ENCODE measurements at regions of chr6 and their contacts with region 1.

Region 1: DNA sequence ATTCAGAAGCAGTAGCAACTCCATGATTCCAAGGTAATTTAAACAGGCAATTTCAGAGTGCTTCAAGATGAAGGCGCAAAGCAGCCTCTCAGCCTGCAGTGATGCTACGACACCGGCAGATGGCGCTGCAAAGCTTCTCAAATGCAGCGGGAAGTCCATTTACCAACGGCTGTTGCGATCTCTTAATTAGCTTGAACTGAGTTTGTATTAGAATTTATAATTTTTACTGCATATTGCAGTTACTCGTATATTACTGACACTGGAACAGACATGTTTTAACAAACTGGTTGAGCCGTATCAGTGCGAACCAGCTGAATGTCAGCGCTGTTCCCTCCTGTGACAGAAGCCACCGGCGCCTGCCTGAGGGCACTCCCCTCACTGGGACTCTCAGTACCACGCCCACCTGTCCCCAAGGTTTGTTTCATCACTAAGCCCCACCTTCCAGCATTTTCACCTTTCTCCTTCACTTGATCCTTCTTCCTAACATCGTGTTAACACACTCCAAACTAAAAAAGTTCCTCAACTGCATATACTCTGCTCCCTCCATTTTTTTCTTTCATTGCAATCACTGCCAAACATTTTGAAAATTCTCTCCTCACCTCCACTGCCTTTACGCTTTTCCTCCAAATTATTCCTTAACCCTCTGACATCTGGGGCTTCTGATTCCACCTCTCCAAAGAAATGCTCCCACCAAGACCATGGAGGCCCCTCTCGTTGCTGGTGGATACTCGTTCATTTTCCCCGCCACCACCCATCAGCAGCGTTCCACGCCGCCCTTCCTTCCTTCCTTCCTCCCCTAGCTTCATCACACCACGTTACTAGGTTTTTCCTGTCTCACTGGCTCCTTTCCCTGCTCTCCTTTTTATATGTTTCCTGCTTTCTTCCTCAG is 14.5 kb downstream of the GNL1 start:
- DNase-seq: peak; percentile 62 to 78
- ATAC-seq: peak; percentile 68 to 86 (median 76)
- H3K4me3 ChIP-seq: peak overlapping the region; percentile 61
- H3K27ac ChIP-seq: no peak overlapping the region
- H3K4me1 ChIP-seq: peaks cover 3% of the 10 kb centered on the region
- H3K27me3 ChIP-seq: no peaks in the 10 kb centered on the region
- CTCF ChIP-seq: peak; percentile 99

Region 2: GRCh38 chr6:30212865-30213666 is 328.7 kb before region 1 on chr6 and contains the start of gene TRIM26:
- intact Hi-C with region 1: loop called in 1 of 2 experiments (anchors 10 kb)
- DNase-seq: peak; percentile 95 to 98
- ATAC-seq: peak; percentile 97
- H3K4me3 ChIP-seq: peak within 1 kb of the TSS; percentile 74
- H3K27ac ChIP-seq: peak within 1 kb of the TSS; percentile 98
- H3K4me1 ChIP-seq: peaks cover 19% of the 10 kb centered on the region
- H3K27me3 ChIP-seq: no peaks in the 10 kb centered on the region
- CTCF ChIP-seq: no peak
- total RNA-seq, gene TRIM26: 13.2 to 18.1 (median 14.8) TPM

Region 3: DNA sequence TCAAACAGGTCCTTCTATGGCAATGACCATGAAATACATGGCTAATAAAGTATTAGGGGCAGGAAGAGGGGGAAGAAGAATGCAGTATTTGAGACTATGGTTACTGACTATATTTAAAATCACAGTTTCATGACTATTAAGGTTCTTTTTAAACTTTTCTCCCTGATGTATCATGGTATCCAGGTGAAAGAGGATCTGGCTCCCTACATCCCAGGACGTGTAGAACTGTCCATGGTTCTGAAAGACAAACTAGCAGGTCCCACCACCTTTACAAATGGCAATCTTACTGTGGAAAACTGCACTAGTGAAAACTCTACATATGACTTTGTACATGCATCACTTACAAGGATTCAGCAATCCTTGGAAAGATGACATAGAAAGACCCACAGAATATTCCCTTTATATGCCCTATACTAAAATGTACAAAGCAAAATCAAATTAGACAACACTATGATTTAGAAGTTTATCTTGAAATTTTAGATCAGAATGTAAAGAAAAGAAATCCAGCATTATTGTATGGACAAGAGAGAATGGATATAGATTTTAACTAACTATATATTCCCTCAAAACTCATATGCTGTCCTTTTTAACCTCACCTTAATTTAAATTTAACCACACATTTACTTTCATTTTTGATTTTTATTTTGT is 163.3 kb before region 1 on chr6:
- intact Hi-C with region 1: no loop called
- DNase-seq: no peak
- ATAC-seq: no peak
- H3K4me3 ChIP-seq: no peak overlapping the region
- H3K27ac ChIP-seq: no peak overlapping the region
- H3K4me1 ChIP-seq: no peaks in the 10 kb centered on the region
- H3K27me3 ChIP-seq: peaks cover 0 to 18% (median 3%) of the 10 kb centered on the region in 3 donors
- CTCF ChIP-seq: no peak

Region 4: GRCh38 chr6:30483677-30484279 is 58.0 kb before region 1 on chr6:
- intact Hi-C with region 1: loop called (anchors 5 kb)
- DNase-seq: no peak
- ATAC-seq: no peak
- H3K4me3 ChIP-seq: no peak overlapping the region
- H3K27ac ChIP-seq: no peak overlapping the region
- H3K4me1 ChIP-seq: no peaks in the 10 kb centered on the region
- H3K27me3 ChIP-seq: peaks cover 5 to 67% (median 10%) of the 10 kb centered on the region in 3 donors
- CTCF ChIP-seq: peak; percentile 39

Region 5: DNA sequence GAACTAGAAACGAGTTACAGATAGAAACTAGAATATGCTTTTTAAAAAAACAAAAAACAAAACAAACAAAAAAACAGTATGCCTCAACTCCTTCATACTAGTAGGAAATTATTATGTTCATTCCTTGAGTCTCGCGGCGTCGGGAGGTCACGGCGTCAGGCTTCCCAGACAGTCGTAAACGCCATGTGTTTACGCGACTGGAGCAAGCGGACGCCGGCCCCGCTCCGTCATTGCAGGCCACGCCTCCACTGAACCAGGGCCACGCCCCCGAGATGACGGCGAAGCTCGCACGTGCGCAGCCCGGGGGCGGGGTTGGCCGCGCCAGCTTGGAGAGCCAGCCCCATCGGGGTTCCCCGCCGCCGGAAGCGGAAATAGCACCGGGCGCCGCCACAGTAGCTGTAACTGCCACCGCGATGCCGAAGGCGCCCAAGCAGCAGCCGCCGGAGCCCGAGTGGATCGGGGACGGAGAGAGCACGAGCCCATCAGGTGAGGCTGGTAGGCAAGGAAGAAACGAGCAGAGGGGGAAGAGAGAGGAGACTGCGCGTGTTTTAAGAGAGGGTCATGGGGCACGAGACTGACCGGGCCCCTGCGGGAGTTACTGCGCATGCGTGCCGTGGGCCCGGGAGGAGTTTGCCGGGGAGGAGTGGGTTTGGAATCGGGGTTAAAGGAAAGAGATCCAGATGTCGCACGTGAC is 29.5 kb after region 1 on chr6 and contains the start of gene ABCF1:
- intact Hi-C with region 1: no loop called
- DNase-seq: peak; percentile 99 to 100
- ATAC-seq: peak; percentile 99
- H3K4me3 ChIP-seq: peak within 1 kb of the TSS; percentile 81
- H3K27ac ChIP-seq: peak within 1 kb of the TSS; percentile 95
- H3K4me1 ChIP-seq: peaks cover 32% of the 10 kb centered on the region
- H3K27me3 ChIP-seq: no peaks in the 10 kb centered on the region
- CTCF ChIP-seq: no peak
- total RNA-seq, gene ABCF1: 64.2 to 108 (median 95.5) TPM

Region 6: GRCh38 chr6:30600451-30600961 is 58.7 kb after region 1 on chr6:
- intact Hi-C with region 1: loop called (anchors 5 kb)
- DNase-seq: no peak
- ATAC-seq: peak in 1 of 4 donors; percentile 18
- H3K4me3 ChIP-seq: no peak overlapping the region
- H3K27ac ChIP-seq: no peak overlapping the region
- H3K4me1 ChIP-seq: no peaks in the 10 kb centered on the region
- H3K27me3 ChIP-seq: no peaks in the 10 kb centered on the region
- CTCF ChIP-seq: no peak

Region 7: GRCh38 chr6:30690403-30691207 is 148.8 kb after region 1 on chr6 and contains the start of gene NRM:
- intact Hi-C with region 1: no loop called
- DNase-seq: peak; percentile 90 to 94
- ATAC-seq: peak; percentile 74 to 82 (median 78)
- H3K4me3 ChIP-seq: peak within 1 kb of the TSS; percentile 69
- H3K27ac ChIP-seq: peak within 1 kb of the TSS; percentile 91
- H3K4me1 ChIP-seq: peaks cover 27% of the 10 kb centered on the region
- H3K27me3 ChIP-seq: no peaks in the 10 kb centered on the region
- CTCF ChIP-seq: no peak
- total RNA-seq, gene NRM: 2.2 to 3.9 (median 2.6) TPM

Region 8: GRCh38 chr6:30717042-30717844 is 175.5 kb after region 1 on chr6 and contains the start of gene MDC1:
- intact Hi-C with region 1: loop called in 1 of 2 experiments (anchors 10 kb)
- DNase-seq: peak; percentile 100
- ATAC-seq: peak; percentile 79 to 88 (median 81)
- H3K4me3 ChIP-seq: peak within 1 kb of the TSS; percentile 66
- H3K27ac ChIP-seq: peak within 1 kb of the TSS; percentile 98
- H3K4me1 ChIP-seq: peaks cover 26% of the 10 kb centered on the region
- H3K27me3 ChIP-seq: no peaks in the 10 kb centered on the region
- CTCF ChIP-seq: peak; percentile 41
- total RNA-seq, gene MDC1: 12.7 to 18.0 (median 15.4) TPM

Region 9: GRCh38 chr6:31087494-31088089 is 545.8 kb after region 1 on chr6:
- intact Hi-C with region 1: loop called in 1 of 2 experiments (anchors 5 kb)
- DNase-seq: peak; percentile 81 to 85
- ATAC-seq: peak; percentile 89 to 97 (median 94)
- H3K4me3 ChIP-seq: no peak overlapping the region
- H3K27ac ChIP-seq: peak overlapping the region; percentile 31
- H3K4me1 ChIP-seq: peaks cover 17% of the 10 kb centered on the region
- H3K27me3 ChIP-seq: no peaks in the 10 kb centered on the region
- CTCF ChIP-seq: peak; percentile 86